ENCODE measurements at regions of chr2 and their contacts with region 1.

Region 1: GRCh38 chr2:131673392-131674173 is 145.9 kb downstream of the CCDC74A start:
- DNase-seq: peak; percentile 82
- H3K4me3 ChIP-seq: peak overlapping the region; percentile 25
- H3K27ac ChIP-seq: no peak overlapping the region
- H3K4me1 ChIP-seq: no peaks in the 10 kb centered on the region
- H3K27me3 ChIP-seq: no peaks in the 10 kb centered on the region; the same call in 1 of the 2 replicates

Region 2: DNA sequence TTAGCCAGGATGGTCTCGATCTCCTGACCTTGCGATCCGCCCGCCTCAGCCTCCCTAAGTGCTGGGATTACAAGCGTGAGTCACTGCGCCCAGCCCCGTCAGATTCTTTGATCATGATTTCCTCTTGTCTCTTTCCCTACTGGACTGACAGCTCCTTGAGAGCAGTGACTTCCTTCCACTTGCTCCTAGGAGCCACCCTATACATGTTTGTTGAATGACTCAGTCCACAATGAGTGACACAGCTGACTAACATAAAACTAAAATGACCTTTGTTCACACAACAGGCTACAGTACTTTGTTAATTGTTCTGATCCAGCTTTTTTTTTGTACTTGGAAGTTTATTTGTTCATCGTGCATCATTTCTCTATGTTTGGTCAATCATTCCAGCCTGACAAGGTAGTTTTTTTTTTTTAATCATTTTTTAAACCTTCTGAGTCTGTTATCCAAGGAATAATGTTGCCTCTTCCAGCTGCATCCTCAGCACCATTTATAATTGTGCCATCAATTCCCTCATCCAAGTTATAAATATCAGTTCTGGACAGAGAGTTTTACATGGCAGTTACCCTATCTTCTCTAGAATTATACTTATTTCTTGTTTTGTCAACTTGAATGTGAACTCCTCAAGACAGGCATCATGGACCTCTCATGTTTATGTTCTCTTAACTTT is 1432.4 kb before region 1 on chr2:
- in situ Hi-C with region 1: no loop called
- DNase-seq: no peak
- H3K4me3 ChIP-seq: no peak overlapping the region
- H3K27ac ChIP-seq: no peak overlapping the region
- H3K4me1 ChIP-seq: no peaks in the 10 kb centered on the region
- H3K27me3 ChIP-seq: no peaks in the 10 kb centered on the region

Region 3: GRCh38 chr2:130744287-130745117 is 929.1 kb before region 1 on chr2:
- in situ Hi-C with region 1: no loop called
- DNase-seq: no peak
- H3K4me3 ChIP-seq: no peak overlapping the region
- H3K27ac ChIP-seq: no peak overlapping the region
- H3K4me1 ChIP-seq: no peaks in the 10 kb centered on the region
- H3K27me3 ChIP-seq: 0 out of 2 replicates have a peak, but pooled peaks cover 4% of the 10 kb centered on the region

Region 4: GRCh38 chr2:131413148-131413747 is 260.3 kb before region 1 on chr2:
- in situ Hi-C with region 1: loop called (anchors 25 kb)
- DNase-seq: peak; percentile 61
- H3K4me3 ChIP-seq: no peak overlapping the region
- H3K27ac ChIP-seq: no peak overlapping the region
- H3K4me1 ChIP-seq: no peaks in the 10 kb centered on the region
- H3K27me3 ChIP-seq: peaks cover 33% of the 10 kb centered on the region

Region 5: DNA sequence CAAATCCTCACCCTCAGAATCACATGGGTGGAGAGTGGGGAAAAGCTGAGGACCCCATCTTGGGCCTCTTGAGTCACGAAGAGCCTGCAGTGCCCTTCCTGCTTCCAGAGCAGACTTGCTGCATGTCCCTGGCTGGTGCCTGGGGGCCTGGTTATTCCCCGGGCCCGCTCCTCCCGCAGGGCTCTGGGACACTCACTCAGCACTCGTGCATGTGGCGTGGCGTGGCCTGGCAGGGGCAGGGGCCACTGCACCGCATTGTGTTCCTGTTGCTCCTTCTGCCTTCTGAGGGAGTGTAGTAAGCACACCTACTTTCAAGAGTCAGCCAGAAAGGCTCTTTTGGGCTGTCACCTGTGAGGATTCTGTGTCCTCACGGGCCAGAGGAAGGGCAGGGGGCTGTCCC is 164.0 kb before region 1 on chr2:
- in situ Hi-C with region 1: no loop called
- DNase-seq: no peak
- H3K4me3 ChIP-seq: no peak overlapping the region
- H3K27ac ChIP-seq: no peak overlapping the region
- H3K4me1 ChIP-seq: no peaks in the 10 kb centered on the region
- H3K27me3 ChIP-seq: no peaks in the 10 kb centered on the region

Region 6: DNA sequence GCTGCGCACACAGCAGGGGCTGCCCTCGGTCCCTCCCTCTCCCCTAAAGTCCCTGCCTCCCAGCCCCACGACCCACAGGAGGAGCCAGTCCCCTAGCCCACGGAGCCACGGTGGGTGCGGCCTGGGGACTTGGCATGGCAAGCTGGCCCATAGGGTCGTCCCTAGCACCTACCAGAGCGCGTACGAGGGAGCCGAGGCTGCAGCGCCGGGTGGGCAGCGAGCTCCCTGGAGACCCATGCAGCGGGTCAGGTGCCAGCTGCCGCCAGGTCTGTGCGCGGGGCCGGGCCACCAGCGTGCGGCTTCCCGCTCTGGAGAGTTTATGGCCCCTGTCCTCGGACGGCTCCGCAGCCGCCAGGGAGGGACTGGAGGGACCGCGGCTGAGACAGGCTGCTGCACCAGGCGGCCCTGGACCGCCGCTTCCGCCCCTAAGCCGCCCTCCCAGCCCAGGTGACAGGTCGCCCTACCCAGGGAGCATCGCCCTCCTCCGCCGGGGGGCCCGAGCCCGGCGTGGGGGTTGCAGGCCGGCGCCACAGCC is 127.7 kb after region 1 on chr2:
- in situ Hi-C with region 1: no loop called
- DNase-seq: no peak
- H3K4me3 ChIP-seq: no peak overlapping the region
- H3K27ac ChIP-seq: no peak overlapping the region
- H3K4me1 ChIP-seq: no peaks in the 10 kb centered on the region; the same call in 1 of the 2 replicates
- H3K27me3 ChIP-seq: no peaks in the 10 kb centered on the region

Measured in GM23248 (cell line).